HCT116 (cell line): ENCODE measurements at regions of chr2 and their contacts with region 1.

Region 1: DNA sequence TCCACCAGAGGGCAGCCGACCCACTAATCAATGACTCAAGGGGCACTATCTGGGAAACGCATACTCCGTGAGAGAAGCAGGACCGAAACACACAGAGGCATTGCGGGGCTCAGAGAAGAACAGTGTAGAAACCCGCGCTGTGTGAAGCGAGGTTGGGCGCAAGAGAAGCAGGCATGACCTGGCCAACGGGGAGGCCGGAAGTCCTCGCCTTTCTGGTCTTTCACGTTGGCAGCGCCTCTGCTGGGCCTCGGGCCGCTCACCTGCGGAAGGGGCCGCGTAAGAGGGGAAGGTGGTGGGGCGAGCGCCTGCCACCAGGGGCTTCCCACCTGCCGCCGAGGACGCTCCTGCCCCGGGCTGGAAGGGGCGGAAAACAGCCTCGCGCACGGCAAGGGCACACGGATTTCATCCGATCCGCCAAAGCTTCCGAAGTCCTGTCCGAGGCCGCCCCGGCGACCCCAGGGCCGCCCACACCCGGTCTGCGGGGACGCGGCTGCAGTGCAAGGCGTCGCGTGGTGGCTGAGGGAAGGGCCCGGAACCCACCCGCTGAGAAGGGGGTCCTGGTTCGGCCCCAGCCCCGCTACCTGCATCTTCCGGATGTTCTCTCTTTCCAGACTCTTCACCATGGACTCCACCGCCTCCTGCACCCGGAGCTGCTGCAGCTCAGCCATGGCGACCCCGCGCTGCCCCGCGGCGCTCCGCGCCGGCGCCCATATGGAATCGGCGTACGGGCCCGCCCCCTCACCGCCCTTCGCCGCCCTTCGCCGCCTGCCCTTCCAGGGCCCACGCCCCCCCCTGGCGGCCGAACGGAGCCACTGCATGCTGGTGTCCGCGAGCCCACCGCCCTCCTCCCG is at the start of gene FAM136A:
- DNase-seq: peak; percentile 59
- ATAC-seq: peak; percentile 82
- H3K4me3 ChIP-seq: peak within 1 kb of the TSS; percentile 72 to 79
- H3K27ac ChIP-seq: peak within 1 kb of the TSS; percentile 91
- H3K4me1 ChIP-seq: peaks cover 8 to 25% of the 10 kb centered on the region in 2 experiments
- H3K27me3 ChIP-seq: no peaks in the 10 kb centered on the region
- CTCF ChIP-seq: peak; percentile 72 to 91 (median 72)
- POLR2A ChIP-seq: peak; percentile 91
- RAD21 ChIP-seq: peak; percentile 83
- total RNA-seq, gene FAM136A: 83.0 TPM

Region 2: DNA sequence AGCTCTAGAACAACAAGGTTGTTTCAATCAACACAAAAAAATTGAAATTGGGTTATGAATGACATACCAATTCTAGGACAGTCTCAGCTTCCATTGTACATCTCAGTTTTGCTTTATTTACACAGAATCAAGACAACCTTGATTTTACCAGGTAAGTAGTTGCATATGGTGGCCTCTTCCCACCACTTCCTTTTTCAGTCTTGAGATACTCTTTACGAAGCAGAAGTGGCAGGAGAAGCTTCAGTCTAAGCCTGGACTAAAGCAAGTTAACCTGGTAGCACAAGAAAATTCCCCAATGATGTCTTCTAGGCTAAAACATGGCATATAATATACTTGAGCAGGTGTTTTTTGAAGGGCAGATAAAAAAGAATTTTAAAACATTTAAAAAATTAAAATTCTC is 11.0 kb after region 1 on chr2:
- CTCF ChIA-PET with region 1: interaction called, 11 read pairs
- POLR2A ChIA-PET with region 1: no interaction called
- RAD21 ChIA-PET with region 1: no interaction called
- intact Hi-C with region 1: no loop called
- DNase-seq: no peak
- ATAC-seq: no peak
- H3K4me3 ChIP-seq: no peak overlapping the region
- H3K27ac ChIP-seq: no peak overlapping the region
- H3K4me1 ChIP-seq: no peaks in the 10 kb centered on the region
- H3K27me3 ChIP-seq: no peaks in the 10 kb centered on the region
- CTCF ChIP-seq: no peak
- POLR2A ChIP-seq: no peak
- RAD21 ChIP-seq: no peak

Region 3: DNA sequence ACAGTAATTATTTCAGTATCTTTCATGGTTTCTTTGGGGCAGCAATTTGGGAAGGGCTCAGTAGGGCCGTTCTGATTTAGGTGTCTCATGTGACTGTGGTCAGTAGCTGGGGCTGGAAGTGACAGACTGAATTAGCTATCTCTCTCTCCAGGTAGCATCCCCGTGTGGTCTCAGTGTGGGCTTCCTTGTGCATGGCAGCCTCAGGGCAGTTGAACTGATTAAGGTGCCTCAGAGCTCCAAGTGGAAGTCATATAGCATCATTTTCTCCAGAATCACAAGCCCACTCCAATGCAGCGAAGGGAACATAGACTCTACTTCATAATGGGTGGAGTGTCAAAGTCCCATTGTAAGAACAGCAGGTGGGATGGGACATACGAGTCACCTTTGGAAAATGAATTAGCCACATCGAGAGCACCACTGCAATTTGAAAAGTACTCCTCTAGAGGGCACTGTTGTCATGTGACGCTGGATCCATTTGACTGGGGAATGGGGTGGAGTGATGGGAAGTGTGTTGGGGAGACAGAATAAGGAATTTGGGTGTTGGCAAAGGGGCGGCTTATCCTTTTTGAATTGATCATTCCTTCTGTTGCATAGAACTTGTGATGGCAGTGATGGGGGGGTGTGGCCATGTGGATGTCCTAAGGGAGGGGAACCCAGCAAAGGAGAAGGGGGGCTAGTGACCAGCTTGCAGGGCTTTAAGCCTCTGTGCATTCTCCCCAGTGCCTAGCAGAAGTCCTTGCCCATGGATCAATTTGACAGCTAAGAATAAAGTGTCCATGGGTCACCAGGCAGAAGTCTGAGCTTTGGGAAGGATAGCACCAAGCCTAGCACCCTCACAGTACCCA is 39.6 kb after region 1 on chr2:
- CTCF ChIA-PET with region 1: interaction called, 5 read pairs
- POLR2A ChIA-PET with region 1: no interaction called
- RAD21 ChIA-PET with region 1: interaction called in 1 of 2 experiments, 3 read pairs
- intact Hi-C with region 1: loop called (anchors 1 kb)
- DNase-seq: peak; percentile 59
- ATAC-seq: peak; percentile 97
- H3K4me3 ChIP-seq: no peak overlapping the region
- H3K27ac ChIP-seq: no peak overlapping the region
- H3K4me1 ChIP-seq: peaks cover 0 to 16% of the 10 kb centered on the region in 2 experiments; a peak in 2 of 4 replicates
- H3K27me3 ChIP-seq: no peaks in the 10 kb centered on the region
- CTCF ChIP-seq: peak; percentile 78 to 94 (median 92)
- POLR2A ChIP-seq: no peak
- RAD21 ChIP-seq: peak; percentile 97

Region 4: GRCh38 chr2:70639841-70640436 is 338.4 kb after region 1 on chr2:
- CTCF ChIA-PET with region 1: interaction called, 167 read pairs
- POLR2A ChIA-PET with region 1: interaction called, 12 read pairs
- RAD21 ChIA-PET with region 1: interaction called, 9 to 21 read pairs
- intact Hi-C with region 1: loop called (anchors 1 kb)
- DNase-seq: no peak
- ATAC-seq: no peak
- H3K4me3 ChIP-seq: no peak overlapping the region
- H3K27ac ChIP-seq: no peak overlapping the region
- H3K4me1 ChIP-seq: no peaks in the 10 kb centered on the region
- H3K27me3 ChIP-seq: no peaks in the 10 kb centered on the region
- CTCF ChIP-seq: no peak
- POLR2A ChIP-seq: no peak
- RAD21 ChIP-seq: no peak

Region 5: DNA sequence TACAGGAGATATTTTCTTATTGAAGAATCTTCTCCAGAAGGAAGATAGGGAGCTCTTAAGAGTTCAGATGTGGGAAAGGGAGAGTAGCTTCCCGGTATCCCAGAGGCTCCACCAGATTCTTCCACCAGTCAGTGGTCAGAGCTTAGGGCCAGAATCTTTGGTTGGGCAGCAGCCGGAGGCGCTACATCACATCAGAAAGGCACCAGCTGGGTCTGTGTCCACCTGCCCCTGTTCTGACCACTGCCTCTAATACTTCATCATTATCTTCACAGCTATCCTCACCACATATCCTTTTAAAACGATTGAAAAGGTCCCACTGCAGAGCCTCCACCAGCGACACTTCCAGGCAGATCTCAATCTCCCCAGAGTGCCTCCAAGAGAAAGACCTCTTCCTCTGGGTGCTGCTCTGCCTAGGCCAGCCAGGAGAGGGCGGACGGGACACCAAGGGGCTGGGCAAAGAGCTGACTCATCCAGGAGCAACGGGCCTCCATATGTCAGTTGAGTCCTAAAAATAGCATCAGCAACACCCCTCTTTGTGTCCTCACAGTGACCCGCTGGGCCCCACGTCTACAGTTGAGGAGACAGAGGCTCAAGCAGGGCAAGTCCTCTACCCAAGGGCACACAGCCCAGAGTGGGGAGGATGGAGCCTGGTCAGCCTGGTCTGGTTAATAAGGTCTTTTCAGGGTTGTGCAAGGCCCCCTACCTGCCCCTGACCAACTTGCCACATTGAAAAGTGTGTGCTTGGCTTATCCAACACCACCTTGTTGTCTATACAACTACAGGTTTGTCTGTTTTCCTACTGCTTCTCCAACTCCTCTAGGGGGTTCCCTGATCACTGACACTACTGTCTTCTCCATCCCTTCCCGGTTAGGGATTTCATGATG is 385.2 kb after region 1 on chr2:
- CTCF ChIA-PET with region 1: interaction called, 14 read pairs
- POLR2A ChIA-PET with region 1: no interaction called
- RAD21 ChIA-PET with region 1: no interaction called
- intact Hi-C with region 1: no loop called
- DNase-seq: peak; percentile 48
- ATAC-seq: peak; percentile 99
- H3K4me3 ChIP-seq: no peak overlapping the region
- H3K27ac ChIP-seq: no peak overlapping the region; the same call in 1 of the 2 replicates
- H3K4me1 ChIP-seq: peaks cover 8 to 15% of the 10 kb centered on the region in 2 experiments; a peak in 3 of 4 replicates
- H3K27me3 ChIP-seq: no peaks in the 10 kb centered on the region
- CTCF ChIP-seq: peak; percentile 62 to 92 (median 71); a peak in 5 of 6 replicates
- POLR2A ChIP-seq: no peak
- RAD21 ChIP-seq: peak; percentile 47

Region 6: GRCh38 chr2:70861777-70862625 is 560.4 kb after region 1 on chr2:
- CTCF ChIA-PET with region 1: no interaction called
- POLR2A ChIA-PET with region 1: no interaction called
- RAD21 ChIA-PET with region 1: no interaction called
- intact Hi-C with region 1: loop called (anchors 5 kb)
- DNase-seq: peak; percentile 71
- ATAC-seq: peak; percentile 97
- H3K4me3 ChIP-seq: no peak overlapping the region; a peak in 1 of 4 replicates
- H3K27ac ChIP-seq: no peak overlapping the region
- H3K4me1 ChIP-seq: peaks cover 0 to 3% of the 10 kb centered on the region in 2 experiments; a peak in 1 of 4 replicates
- H3K27me3 ChIP-seq: no peaks in the 10 kb centered on the region
- CTCF ChIP-seq: peak; percentile 98 to 99 (median 99)
- POLR2A ChIP-seq: no peak
- RAD21 ChIP-seq: peak; percentile 92